Endothelial cell of umbilical vein (primary cell): ENCODE measurements at regions of chr13 and their contacts with region 1.

Region 1: DNA sequence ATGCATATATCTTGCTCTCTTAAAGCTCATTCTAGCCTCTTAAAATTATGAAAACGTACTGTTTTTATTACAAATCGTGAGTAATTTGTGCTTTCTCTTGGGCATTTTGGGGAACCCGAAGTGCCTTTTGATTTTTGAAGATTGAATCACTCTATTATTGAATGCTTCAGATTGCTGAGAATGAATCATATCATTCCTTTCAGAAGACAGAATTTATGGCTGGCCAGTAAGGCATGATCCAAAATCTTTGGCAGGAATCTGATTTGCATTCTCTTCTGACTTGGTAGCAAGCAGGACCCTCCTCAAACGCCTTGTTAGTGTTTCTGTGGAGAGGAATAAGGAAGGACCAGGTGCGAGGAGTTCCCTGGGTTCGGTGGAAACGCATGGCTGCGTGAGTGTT is 49.5 kb downstream of the STARD13 start:
- DNase-seq: peak; percentile 59
- H3K4me3 ChIP-seq: no peak overlapping the region
- H3K27ac ChIP-seq: peak overlapping the region; percentile 73
- H3K4me1 ChIP-seq: peaks cover 28% of the 10 kb centered on the region
- H3K27me3 ChIP-seq: no peaks in the 10 kb centered on the region
- CTCF ChIP-seq: no peak
- POLR2A ChIP-seq: no peak

Region 2: DNA sequence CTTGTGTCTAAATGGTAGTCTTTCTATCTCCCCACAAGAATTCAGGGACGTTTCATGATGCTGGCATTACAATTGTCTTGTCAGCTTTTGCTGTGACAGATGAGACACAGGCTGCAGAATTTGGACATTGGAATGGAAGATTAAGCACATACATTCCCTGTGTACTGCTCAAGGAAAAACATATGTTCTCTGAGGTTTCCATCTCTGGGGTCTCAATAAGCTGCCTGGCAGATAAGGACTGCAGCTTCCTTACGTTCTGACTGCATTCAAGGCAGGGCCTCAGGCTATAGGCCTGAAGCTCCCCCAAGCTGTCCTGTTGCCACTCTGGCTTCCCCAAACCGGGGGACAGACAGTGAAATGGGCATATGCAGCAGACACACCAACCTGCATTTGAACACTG is 311.1 kb before region 1 on chr13:
- CTCF ChIA-PET with region 1: no interaction called
- POLR2A ChIA-PET with region 1: no interaction called
- dilution Hi-C with region 1: no loop called
- intact Hi-C with region 1: no loop called
- DNase-seq: no peak
- H3K4me3 ChIP-seq: no peak overlapping the region
- H3K27ac ChIP-seq: no peak overlapping the region
- H3K4me1 ChIP-seq: no peaks in the 10 kb centered on the region
- H3K27me3 ChIP-seq: peaks cover 0 to 2% of the 10 kb centered on the region in 2 experiments
- CTCF ChIP-seq: no peak
- POLR2A ChIP-seq: no peak

Region 3: GRCh38 chr13:33251131-33251661 is 15.2 kb after region 1 on chr13:
- CTCF ChIA-PET with region 1: interaction called, 3 read pairs
- POLR2A ChIA-PET with region 1: no interaction called
- dilution Hi-C with region 1: no loop called
- intact Hi-C with region 1: loop called (anchors 1 kb)
- DNase-seq: peak; percentile 87
- H3K4me3 ChIP-seq: peak overlapping the region in 1 of 3 experiments; percentile 3
- H3K27ac ChIP-seq: peak overlapping the region; percentile 85
- H3K4me1 ChIP-seq: peaks cover 44% of the 10 kb centered on the region
- H3K27me3 ChIP-seq: no peaks in the 10 kb centered on the region
- CTCF ChIP-seq: no peak
- POLR2A ChIP-seq: no peak